IMR-90 (cell line): ENCODE measurements at regions of chr14 and their contacts with region 1.

Region 1: GRCh38 chr14:32576088-32576795 is 247.1 kb downstream of the AKAP6 start:
- DNase-seq: peak; percentile 59
- ATAC-seq: peak; percentile 98
- H3K4me3 ChIP-seq: no peak overlapping the region
- H3K27ac ChIP-seq: no peak overlapping the region
- H3K4me1 ChIP-seq: no peaks in the 10 kb centered on the region
- H3K27me3 ChIP-seq: peaks cover 18% of the 10 kb centered on the region
- CTCF ChIP-seq: peak; percentile 97
- POLR2A ChIP-seq: no peak
- RAD21 ChIP-seq: peak; percentile 96

Region 2: GRCh38 chr14:32472512-32473463 is 103.5 kb before region 1 on chr14:
- CTCF ChIA-PET with region 1: no interaction called
- POLR2A ChIA-PET with region 1: no interaction called
- dilution Hi-C with region 1: no loop called
- in situ Hi-C with region 1: no loop called
- intact Hi-C with region 1: no loop called
- DNase-seq: peak; percentile 81
- ATAC-seq: peak; percentile 74
- H3K4me3 ChIP-seq: no peak overlapping the region
- H3K27ac ChIP-seq: peak overlapping the region; percentile 99
- H3K4me1 ChIP-seq: peaks cover 20% of the 10 kb centered on the region
- H3K27me3 ChIP-seq: no peaks in the 10 kb centered on the region
- CTCF ChIP-seq: no peak
- POLR2A ChIP-seq: no peak
- RAD21 ChIP-seq: no peak

Region 3: GRCh38 chr14:32998433-32998832 is 422.2 kb after region 1 on chr14:
- CTCF ChIA-PET with region 1: interaction called, 3 read pairs
- POLR2A ChIA-PET with region 1: no interaction called
- dilution Hi-C with region 1: no loop called
- in situ Hi-C with region 1: loop called (anchors 10 kb)
- intact Hi-C with region 1: loop called (anchors 1 kb)
- DNase-seq: peak; percentile 9
- ATAC-seq: no peak
- H3K4me3 ChIP-seq: no peak overlapping the region
- H3K27ac ChIP-seq: no peak overlapping the region
- H3K4me1 ChIP-seq: no peaks in the 10 kb centered on the region
- H3K27me3 ChIP-seq: no peaks in the 10 kb centered on the region
- CTCF ChIP-seq: peak; percentile 55
- POLR2A ChIP-seq: no peak
- RAD21 ChIP-seq: peak; percentile 40; the same call in 1 of the 2 replicates

Region 4: DNA sequence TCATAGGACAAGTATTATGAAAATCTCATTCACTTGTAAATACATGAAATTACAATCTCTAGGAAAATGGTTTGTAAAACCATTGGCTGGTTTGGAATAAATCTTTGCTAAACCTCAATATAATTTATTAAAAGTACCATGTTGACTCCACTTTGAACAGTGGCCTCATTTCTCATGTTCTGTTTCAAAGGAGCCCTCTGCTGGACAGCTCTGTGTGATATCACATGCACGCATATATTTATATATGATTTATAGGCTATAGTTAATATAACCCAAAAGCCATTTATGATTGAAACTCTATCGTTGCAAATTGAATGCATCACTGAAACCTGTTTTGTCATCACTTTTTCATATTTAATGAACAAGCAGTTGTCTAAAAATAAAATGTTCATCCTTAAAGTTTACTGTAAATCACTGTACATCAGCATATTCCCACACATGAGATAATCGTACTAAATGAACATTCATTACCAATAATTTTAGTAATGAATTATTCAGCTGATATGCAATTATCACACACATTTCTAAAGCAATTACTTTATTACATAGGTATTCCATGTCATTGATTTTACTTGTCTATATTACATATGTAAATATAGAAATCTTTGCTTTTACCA is 856.3 kb after region 1 on chr14:
- CTCF ChIA-PET with region 1: no interaction called
- POLR2A ChIA-PET with region 1: no interaction called
- dilution Hi-C with region 1: no loop called
- in situ Hi-C with region 1: loop called (anchors 25 kb)
- intact Hi-C with region 1: loop called (anchors 1 kb)
- DNase-seq: peak; percentile 18
- ATAC-seq: peak; percentile 68
- H3K4me3 ChIP-seq: no peak overlapping the region
- H3K27ac ChIP-seq: no peak overlapping the region
- H3K4me1 ChIP-seq: no peaks in the 10 kb centered on the region
- H3K27me3 ChIP-seq: no peaks in the 10 kb centered on the region
- CTCF ChIP-seq: peak; percentile 40
- POLR2A ChIP-seq: no peak
- RAD21 ChIP-seq: peak; percentile 20; the same call in 1 of the 2 replicates

Region 5: DNA sequence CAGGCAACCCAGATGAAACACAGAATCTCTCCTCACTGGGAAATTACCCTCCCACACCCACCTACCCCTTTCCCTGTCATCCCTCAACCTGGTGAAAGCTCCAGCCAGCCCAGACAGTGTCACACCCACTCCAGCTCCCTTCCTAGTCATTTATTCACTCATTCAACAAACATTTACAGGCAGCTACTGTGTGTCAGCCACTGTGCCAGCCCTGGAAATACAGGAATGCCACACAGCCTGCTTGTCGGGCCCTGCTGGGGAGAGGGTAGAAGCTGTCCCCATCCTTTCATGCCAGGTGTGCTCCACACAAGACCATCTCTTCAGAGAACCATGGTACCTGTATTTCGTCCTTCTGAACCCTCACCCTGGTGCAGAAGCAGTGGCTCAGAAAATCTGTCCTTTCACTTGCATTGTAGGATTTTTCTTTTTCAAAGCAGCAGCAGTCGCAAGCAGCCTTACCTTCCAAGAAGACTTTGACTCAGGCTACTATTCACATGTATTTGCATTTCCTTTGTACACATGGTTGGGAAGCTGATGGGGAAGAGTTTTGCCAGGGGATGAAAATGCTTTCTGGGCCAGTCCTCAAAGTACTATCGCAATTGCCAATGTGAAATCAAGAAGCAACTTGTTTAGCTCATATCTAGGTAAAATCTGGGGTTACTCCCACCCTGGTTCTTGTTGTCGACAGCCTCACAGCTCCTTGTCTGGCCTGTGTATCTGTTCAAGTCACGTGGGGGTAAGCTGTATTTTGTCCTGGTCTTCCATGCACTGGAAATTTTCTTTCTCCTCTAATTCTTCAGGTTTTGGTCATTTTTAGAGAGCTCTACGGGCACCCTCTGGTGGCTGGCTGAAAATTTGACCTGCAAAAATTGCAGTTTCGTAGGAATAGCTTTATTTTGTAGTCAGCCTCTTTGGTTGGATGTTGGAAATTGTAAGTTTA is 1522.1 kb after region 1 on chr14:
- CTCF ChIA-PET with region 1: no interaction called
- POLR2A ChIA-PET with region 1: no interaction called
- dilution Hi-C with region 1: no loop called
- in situ Hi-C with region 1: no loop called
- intact Hi-C with region 1: loop called (anchors 1 kb)
- DNase-seq: peak; percentile 29
- ATAC-seq: peak; percentile 62
- H3K4me3 ChIP-seq: no peak overlapping the region
- H3K27ac ChIP-seq: no peak overlapping the region
- H3K4me1 ChIP-seq: no peaks in the 10 kb centered on the region
- H3K27me3 ChIP-seq: peaks cover 6% of the 10 kb centered on the region; the same call in 1 of the 2 replicates
- CTCF ChIP-seq: peak; percentile 65
- POLR2A ChIP-seq: no peak
- RAD21 ChIP-seq: peak; percentile 64

Region 6: DNA sequence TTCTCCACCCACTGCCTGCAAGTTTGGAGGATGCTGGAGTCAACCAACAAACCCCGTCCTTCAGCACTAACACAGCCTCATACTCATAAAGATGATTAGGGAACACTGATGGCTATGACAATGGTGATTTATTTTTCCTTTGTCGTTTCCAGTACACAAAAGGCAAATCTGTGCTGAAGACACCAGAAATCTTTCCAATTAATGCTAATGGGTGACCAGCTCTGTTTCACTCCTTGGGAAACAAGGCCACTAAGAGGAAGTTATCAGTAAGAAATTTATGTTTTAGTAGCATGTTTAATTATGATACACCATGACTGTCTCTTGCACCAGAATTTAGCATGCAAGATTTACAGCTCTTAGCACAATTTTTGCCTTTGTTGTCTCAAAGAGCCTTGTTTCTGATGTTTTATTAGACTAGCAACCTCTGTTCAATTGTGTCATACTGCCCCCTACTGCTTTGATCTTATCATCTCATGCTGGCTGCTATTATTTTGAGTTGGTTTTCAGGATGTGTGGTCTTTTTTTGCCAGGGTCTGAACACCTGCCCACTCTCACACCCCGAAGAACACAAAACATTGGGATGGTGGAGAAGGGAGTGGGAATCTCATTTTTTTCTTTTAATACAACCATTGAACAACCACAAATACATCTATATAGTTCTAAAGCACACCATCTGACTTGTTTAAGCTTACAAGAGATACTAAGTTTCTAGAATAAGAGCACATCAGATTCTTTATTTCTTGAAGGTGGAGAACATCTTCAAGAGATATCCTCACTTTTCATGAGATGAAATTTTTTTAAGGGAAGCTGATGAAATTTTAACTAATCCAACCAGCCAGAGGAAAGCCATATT is 1724.9 kb after region 1 on chr14:
- CTCF ChIA-PET with region 1: no interaction called
- POLR2A ChIA-PET with region 1: no interaction called
- dilution Hi-C with region 1: no loop called
- in situ Hi-C with region 1: no loop called
- intact Hi-C with region 1: loop called (anchors 5 kb)
- DNase-seq: peak; percentile 12
- ATAC-seq: no peak
- H3K4me3 ChIP-seq: no peak overlapping the region
- H3K27ac ChIP-seq: no peak overlapping the region
- H3K4me1 ChIP-seq: no peaks in the 10 kb centered on the region
- H3K27me3 ChIP-seq: no peaks in the 10 kb centered on the region; the same call in none of the 2 replicates
- CTCF ChIP-seq: peak; percentile 49
- POLR2A ChIP-seq: no peak
- RAD21 ChIP-seq: peak; percentile 39